ENCODE measurements at regions of chr10 and their contacts with region 1.

Region 1: DNA sequence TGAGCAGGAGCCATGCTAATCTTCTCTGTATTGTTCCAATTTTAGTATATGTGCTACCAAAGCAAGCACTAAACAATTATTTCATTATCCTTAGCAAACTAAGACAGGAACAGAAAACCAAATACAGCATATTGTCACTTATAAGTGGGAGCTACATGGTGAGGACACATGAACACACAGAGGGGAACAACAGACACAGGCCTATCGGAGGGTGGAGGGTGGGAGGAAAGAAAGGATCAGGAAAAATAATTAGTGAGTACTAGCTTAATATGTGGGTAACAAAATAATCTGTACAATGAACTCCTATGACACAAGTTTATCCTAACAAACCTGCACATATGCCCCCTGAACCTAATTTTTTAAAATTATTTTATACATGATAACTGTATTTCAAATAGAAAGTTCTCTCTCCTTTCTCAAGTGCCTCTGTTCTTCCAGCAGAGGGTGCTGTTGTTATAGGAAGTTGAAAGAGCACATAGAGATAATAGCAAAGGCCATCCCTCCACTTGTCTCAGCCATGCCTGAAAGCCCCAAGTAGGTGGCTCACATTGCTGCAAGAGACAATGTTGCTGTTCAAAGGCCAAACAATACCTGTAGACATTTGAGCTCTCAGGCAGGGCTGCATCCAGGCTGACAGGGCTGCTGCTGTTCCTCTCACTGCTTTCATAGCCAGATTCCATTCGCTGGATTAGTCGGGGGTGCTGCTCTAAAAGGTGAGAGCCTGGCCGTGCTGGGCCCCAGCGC is 33.4 kb upstream of the PPP3CB start:
- DNase-seq: peak; percentile 58 to 80
- ATAC-seq: peak; percentile 98 to 99
- H3K4me3 ChIP-seq: no peak overlapping the region
- H3K27ac ChIP-seq: no peak overlapping the region
- H3K4me1 ChIP-seq: no peaks in the 10 kb centered on the region
- CTCF ChIP-seq: peak; percentile 93
- EP300 ChIP-seq: no peak
- POLR2A ChIP-seq: no peak
- RAD21 ChIP-seq: peak; percentile 92 to 96

Region 2: GRCh38 chr10:73509695-73510094 is 19.6 kb before region 1 on chr10:
- CTCF ChIA-PET with region 1: interaction called, 55 read pairs
- POLR2A ChIA-PET with region 1: no interaction called
- DNase-seq: no peak
- ATAC-seq: no peak
- H3K4me3 ChIP-seq: no peak overlapping the region
- H3K27ac ChIP-seq: no peak overlapping the region
- H3K4me1 ChIP-seq: no peaks in the 10 kb centered on the region
- CTCF ChIP-seq: no peak
- EP300 ChIP-seq: no peak
- POLR2A ChIP-seq: no peak
- RAD21 ChIP-seq: no peak

Region 3: GRCh38 chr10:73552819-73553715 is 23.8 kb after region 1 on chr10:
- CTCF ChIA-PET with region 1: interaction called, 23 read pairs
- POLR2A ChIA-PET with region 1: no interaction called
- DNase-seq: no peak
- ATAC-seq: no peak
- H3K4me3 ChIP-seq: no peak overlapping the region
- H3K27ac ChIP-seq: no peak overlapping the region
- H3K4me1 ChIP-seq: no peaks in the 10 kb centered on the region
- CTCF ChIP-seq: no peak
- EP300 ChIP-seq: no peak
- POLR2A ChIP-seq: no peak
- RAD21 ChIP-seq: no peak

Region 4: GRCh38 chr10:73609116-73609515 is 79.9 kb after region 1 on chr10:
- CTCF ChIA-PET with region 1: interaction called, 20 read pairs
- POLR2A ChIA-PET with region 1: no interaction called
- DNase-seq: no peak
- ATAC-seq: no peak
- H3K4me3 ChIP-seq: no peak overlapping the region
- H3K27ac ChIP-seq: no peak overlapping the region
- H3K4me1 ChIP-seq: no peaks in the 10 kb centered on the region
- CTCF ChIP-seq: no peak
- EP300 ChIP-seq: no peak
- POLR2A ChIP-seq: no peak
- RAD21 ChIP-seq: no peak

Region 5: DNA sequence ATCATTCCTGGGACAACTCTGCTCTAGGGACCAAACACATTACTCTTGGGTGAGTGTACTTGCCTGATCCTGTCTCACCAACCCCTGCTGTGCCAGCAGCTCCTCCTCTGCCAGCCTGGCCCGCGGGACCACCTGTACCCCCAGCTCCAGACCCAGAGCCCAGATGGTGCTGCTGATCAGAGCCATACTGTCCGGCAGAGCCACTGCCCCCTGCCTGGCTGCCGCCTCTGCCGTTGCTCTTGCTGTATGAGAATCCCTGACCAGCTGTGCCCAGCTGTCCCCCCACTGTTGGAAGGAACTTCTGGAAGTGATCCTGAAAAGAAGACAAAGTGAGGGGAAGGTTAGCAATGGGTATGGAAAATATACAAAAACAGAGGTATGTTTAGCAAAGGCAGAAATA is 105.2 kb after region 1 on chr10:
- CTCF ChIA-PET with region 1: interaction called, 378 read pairs
- POLR2A ChIA-PET with region 1: no interaction called
- DNase-seq: no peak
- ATAC-seq: peak in 1 of 2 experiments; percentile 27; a peak in 2 of 6 replicates
- H3K4me3 ChIP-seq: no peak overlapping the region
- H3K27ac ChIP-seq: no peak overlapping the region
- H3K4me1 ChIP-seq: no peaks in the 10 kb centered on the region
- CTCF ChIP-seq: no peak
- EP300 ChIP-seq: no peak
- POLR2A ChIP-seq: no peak
- RAD21 ChIP-seq: no peak

Region 6: GRCh38 chr10:73653701-73654335 is 124.6 kb after region 1 on chr10:
- CTCF ChIA-PET with region 1: interaction called, 378 read pairs
- POLR2A ChIA-PET with region 1: no interaction called
- DNase-seq: peak; percentile 40 to 67
- ATAC-seq: peak; percentile 72 to 85
- H3K4me3 ChIP-seq: no peak overlapping the region
- H3K27ac ChIP-seq: no peak overlapping the region
- H3K4me1 ChIP-seq: no peaks in the 10 kb centered on the region
- CTCF ChIP-seq: peak; percentile 26; the same call in 2 of the 3 replicates
- EP300 ChIP-seq: no peak
- POLR2A ChIP-seq: no peak
- RAD21 ChIP-seq: peak in 1 of 2 experiments; percentile 69; a peak in 3 of 5 replicates

Measured in A549 (cell line).